Panc1 (cell line): ENCODE measurements at regions of chr6 and their contacts with region 1.

Region 1: DNA sequence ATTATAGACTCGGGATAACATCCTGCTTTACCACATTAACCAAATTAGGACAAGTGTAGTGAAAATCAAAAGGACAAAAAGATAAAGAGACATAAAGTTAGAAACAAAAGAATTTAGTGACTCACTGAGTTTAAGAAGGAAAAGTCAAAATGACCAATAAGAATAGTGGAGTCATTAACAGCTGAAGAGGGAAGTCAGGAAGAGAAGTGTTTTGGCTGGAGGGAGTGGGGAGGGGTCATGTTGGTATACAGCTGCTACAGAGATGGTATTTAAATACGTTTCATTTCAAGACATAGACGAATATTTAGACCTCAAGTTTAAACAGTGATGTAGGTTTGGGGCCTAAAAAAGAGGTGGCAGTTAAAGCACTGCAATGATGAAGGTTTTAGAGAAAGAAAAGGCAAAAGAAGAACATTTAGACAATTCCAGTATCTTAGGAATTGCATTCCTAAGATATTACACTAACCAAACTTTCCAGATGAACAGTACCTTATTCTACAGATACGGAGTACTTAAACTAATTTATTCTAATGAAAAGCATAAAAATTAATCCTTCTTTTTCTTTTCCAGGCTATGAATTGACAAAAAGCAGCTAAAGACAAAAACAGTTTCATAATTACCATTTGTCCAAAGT is 10.6 kb downstream of the FKBP5 start:
- DNase-seq: no peak
- ATAC-seq: no peak
- H3K4me3 ChIP-seq: no peak overlapping the region
- H3K27ac ChIP-seq: no peak overlapping the region
- H3K4me1 ChIP-seq: no peaks in the 10 kb centered on the region
- H3K27me3 ChIP-seq: no peaks in the 10 kb centered on the region
- CTCF ChIP-seq: no peak

Region 2: GRCh38 chr6:35544523-35545313 is 133.4 kb before region 1 on chr6:
- CTCF ChIA-PET with region 1: no interaction called
- POLR2A ChIA-PET with region 1: no interaction called
- in situ Hi-C with region 1: no loop called
- intact Hi-C with region 1: no loop called
- DNase-seq: no peak
- ATAC-seq: no peak
- H3K4me3 ChIP-seq: no peak overlapping the region
- H3K27ac ChIP-seq: no peak overlapping the region
- H3K4me1 ChIP-seq: no peaks in the 10 kb centered on the region
- H3K27me3 ChIP-seq: no peaks in the 10 kb centered on the region
- CTCF ChIP-seq: no peak

Region 3: DNA sequence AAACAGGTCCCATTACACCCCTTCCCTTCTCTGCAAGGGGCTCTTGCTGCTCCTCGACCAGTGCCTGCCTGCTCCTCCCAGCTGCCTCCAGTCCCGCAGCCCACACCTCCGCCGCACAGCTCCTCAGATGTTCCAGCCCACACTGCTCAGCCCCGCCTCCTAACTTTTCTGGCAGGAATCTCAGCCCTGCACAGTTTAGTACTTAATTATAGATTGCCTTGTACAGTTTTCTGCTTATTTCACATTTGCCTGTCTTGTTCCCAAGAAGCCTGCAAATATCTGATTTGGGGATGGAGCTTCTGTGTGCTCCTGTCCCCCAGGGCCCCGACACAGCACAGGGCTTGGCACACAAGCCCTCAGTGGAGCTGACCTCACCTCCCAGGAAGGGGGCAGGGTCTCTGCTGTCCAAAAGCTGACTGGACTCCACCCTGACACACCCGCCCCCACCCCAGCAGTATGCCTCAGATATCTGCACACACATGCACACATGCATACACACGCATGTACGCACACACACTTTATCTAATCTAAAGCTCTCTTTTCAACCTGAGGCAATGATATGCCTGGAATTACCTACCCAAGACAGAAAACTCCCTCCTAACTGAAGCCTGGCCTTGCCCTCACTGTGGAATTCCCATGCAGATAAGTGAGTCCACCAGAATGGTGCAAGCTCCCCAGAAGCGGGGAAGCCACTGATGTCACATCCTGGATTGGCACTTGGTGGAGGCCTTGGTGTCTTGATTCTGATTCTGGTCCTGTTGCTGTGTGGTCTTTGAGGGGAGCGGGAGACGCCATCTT is 590.5 kb after region 1 on chr6:
- CTCF ChIA-PET with region 1: no interaction called
- POLR2A ChIA-PET with region 1: interaction called, 10 read pairs
- in situ Hi-C with region 1: no loop called
- intact Hi-C with region 1: no loop called
- DNase-seq: no peak
- ATAC-seq: no peak
- H3K4me3 ChIP-seq: no peak overlapping the region
- H3K27ac ChIP-seq: no peak overlapping the region
- H3K4me1 ChIP-seq: peaks cover 10% of the 10 kb centered on the region
- H3K27me3 ChIP-seq: peaks cover 3% of the 10 kb centered on the region
- CTCF ChIP-seq: no peak